ENCODE measurements at regions of chr17 and their contacts with region 1.

Region 1: GRCh38 chr17:46841561-46842379 is 9.6 kb upstream of the WNT9B start:
- DNase-seq: no peak
- ATAC-seq: peak; percentile 65

Region 2: GRCh38 chr17:46742565-46743270 is 99.1 kb before region 1 on chr17:
- intact Hi-C with region 1: no loop called
- DNase-seq: no peak
- ATAC-seq: peak; percentile 87

Region 3: DNA sequence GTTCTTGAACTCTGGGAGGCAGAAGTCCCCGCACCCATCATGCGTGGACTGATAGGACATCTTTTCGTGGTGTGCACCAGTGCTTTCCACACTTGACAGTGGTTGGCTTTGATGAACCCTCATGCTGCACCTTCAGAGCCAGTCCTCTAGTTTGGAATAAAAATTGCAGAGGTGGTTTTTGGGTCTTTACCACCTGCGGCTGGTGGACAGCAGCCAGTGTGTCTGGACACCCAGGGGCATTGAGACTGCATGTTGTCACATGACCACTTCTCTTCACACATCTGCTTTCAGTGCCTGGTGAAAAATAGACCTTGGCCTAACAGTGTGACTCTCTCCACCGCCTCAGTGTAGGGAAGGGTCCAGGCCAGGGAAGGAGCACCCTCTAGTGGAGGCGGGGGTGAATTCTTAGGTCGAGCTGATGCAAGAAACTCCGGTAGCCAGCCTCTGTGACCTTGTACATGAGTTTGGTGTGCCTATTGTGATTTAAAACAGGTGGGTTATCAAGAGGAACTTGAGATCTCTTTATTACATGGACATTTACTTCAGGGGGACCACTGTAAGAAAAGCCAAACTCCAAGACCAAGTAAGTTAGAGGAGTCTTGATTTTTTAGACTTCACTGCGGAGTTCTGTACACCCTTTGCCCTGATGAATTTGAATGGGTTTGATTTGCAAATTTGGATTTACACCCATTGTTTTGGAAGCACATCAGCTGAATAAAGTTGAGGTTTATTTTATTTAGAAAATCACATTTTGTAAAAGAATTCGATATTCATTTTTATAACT is 99.0 kb after region 1 on chr17:
- intact Hi-C with region 1: loop called (anchors 5 kb)
- DNase-seq: peak; percentile 77
- ATAC-seq: peak; percentile 82

Region 4: GRCh38 chr17:46995841-46996571 is 154.2 kb after region 1 on chr17:
- intact Hi-C with region 1: loop called (anchors 10 kb)
- DNase-seq: no peak
- ATAC-seq: no peak